Activated CD4-positive, alpha-beta T cell treated with anti-CD3 and anti-CD28 coated beads, Interleukin-2, amount 10 ng/mL, durations not matched to agents 7 days and 5 days (primary cell): ENCODE measurements at regions of chr6 and their contacts with region 1.

Region 1: DNA sequence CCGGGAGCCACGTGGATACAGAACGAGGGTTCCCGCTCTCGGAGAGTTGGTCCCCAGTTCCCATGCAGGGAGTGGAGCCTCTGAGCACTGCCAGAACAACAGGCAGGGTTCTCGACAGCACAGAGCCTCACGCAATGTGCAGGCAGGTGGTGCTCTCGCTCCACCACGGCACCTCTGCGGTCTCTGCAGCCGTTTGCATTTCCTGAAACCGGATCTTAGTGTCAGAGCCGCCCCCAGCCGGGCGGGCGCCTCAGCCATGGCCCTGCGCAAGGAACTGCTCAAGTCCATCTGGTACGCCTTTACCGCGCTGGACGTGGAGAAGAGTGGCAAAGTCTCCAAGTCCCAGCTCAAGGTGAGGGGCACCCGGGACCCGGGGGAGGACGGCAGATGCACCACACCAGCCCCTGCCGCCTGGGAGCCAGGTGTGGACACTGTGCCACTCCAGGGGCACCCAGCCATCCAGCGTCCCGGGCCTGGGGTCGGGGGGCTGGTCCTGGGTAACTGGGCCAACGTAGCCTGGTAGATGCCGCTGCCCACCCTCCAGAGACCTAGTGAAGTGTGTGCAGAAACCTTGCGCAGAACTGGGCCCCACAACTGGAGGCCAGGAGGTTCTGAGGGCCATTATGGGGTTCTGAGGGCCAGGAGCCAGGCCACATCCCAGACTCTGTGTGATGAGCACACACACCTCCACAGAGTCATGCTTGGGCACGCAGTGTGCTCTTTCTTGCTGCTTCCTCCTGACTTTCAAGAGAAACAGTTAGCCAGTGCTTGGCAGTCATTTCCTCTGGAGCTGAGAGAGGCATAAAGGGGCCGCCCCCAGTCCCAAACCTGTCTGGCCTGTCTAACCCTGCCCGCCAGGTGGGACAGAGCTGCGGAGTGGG is at the start of gene DEF6:
- DNase-seq: peak; percentile 93
- H3K4me3 Mint-ChIP-seq: peak within 1 kb of the TSS; percentile 85
- H3K27ac Mint-ChIP-seq: peak within 1 kb of the TSS; percentile 96
- H3K4me1 Mint-ChIP-seq: peaks cover 55% of the 10 kb centered on the region
- H3K27me3 Mint-ChIP-seq: no peaks in the 10 kb centered on the region
- total RNA-seq, gene DEF6: 186 to 219 TPM

Region 2: DNA sequence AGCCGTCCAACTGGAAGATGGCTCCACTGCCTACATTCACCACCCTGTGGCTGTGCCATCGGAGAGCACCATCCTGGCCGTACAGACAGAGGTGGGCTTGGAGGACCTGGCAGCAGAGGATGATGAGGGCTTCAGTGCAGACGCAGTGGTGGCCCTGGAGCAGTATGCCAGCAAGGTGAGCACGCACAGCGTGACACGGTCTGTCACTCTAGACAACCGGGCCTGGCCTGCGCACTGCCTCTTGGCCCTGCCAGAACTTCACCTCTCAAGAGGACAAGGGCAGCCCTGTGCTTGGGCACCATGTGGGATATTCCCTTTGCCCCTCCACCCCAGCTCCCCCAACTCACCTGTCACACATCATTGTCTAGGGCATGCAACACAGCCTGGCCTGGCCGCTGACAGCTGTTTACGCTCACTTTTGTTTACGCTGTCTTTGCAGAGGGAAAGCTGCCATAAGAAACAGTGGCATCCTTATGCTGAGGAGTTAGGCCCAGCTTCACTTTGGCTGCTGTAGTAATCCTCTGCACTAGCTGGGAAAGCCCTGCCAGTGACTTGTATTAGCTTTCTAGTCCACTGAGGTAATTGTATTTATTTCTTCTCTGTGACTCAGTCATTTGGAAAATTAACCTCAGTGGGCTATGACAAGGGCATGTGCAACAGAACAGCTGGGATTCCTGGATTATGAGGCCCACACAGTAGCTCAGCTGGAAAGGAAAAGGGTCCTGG is 10.0 kb before region 1 on chr6:
- CTCF ChIA-PET with region 1: interaction called, 22 read pairs
- POLR2A ChIA-PET with region 1: no interaction called
- DNase-seq: no peak
- H3K4me3 Mint-ChIP-seq: no peak overlapping the region
- H3K27ac Mint-ChIP-seq: no peak overlapping the region
- H3K4me1 Mint-ChIP-seq: no peaks in the 10 kb centered on the region
- H3K27me3 Mint-ChIP-seq: no peaks in the 10 kb centered on the region

Region 3: GRCh38 chr6:35327349-35328027 is 29.6 kb after region 1 on chr6:
- CTCF ChIA-PET with region 1: interaction called, 25 read pairs
- POLR2A ChIA-PET with region 1: interaction called, 5 read pairs
- DNase-seq: peak; percentile 83
- H3K4me3 Mint-ChIP-seq: no peak overlapping the region
- H3K27ac Mint-ChIP-seq: peak overlapping the region; percentile 82
- H3K4me1 Mint-ChIP-seq: peaks cover 28% of the 10 kb centered on the region
- H3K27me3 Mint-ChIP-seq: no peaks in the 10 kb centered on the region

Region 4: GRCh38 chr6:35342258-35343091 is 44.6 kb after region 1 on chr6 and contains the start of gene PPARD:
- CTCF ChIA-PET with region 1: interaction called, 17 read pairs
- POLR2A ChIA-PET with region 1: no interaction called
- DNase-seq: peak; percentile 97
- H3K4me3 Mint-ChIP-seq: peak within 1 kb of the TSS; percentile 96
- H3K27ac Mint-ChIP-seq: peak within 1 kb of the TSS; percentile 93
- H3K4me1 Mint-ChIP-seq: peaks cover 53% of the 10 kb centered on the region
- H3K27me3 Mint-ChIP-seq: peaks cover under 1% of the 10 kb centered on the region
- total RNA-seq, gene PPARD: 24.4 to 25.8 TPM

Region 5: DNA sequence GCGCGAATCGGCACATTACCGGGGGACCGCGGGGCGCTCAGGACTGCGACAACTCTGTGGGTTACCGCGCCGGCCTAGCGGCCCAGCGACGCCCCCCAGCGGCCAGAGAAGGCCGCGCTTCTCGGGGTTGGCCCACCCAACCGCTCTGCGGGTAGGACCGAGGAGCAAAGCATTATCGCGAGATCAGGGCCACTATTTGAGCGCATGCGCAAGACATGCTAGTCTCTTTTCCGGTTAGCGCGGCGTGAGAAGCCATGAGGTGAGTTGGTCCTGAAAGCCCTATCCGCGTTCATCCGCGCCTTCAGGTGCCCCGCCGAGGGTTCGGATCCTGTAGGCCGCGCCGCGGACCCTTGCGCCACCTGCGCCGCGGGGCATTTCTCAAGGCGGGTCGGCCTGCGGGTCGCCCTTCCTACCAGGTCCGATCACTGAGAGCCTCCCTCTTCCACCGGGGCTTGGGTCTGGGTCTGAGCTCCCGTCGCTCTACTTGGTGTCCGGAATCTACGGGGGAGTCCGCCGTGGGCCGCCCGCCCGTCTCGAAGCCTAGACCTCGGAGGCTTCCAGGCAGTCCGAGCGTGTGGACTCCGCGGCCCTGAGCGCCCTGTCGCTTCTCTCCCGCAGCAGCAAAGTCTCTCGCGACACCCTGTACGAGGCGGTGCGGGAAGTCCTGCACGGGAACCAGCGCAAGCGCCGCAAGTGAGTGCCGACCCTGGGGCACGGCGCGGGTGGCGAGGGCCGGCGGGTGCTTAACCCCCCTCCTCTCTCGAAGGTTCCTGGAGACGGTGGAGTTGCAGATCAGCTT is 170.5 kb after region 1 on chr6 and contains the start of gene RPL10A:
- CTCF ChIA-PET with region 1: interaction called, 10 read pairs
- POLR2A ChIA-PET with region 1: no interaction called
- DNase-seq: peak; percentile 98
- H3K4me3 Mint-ChIP-seq: peak within 1 kb of the TSS; percentile 91
- H3K27ac Mint-ChIP-seq: peak within 1 kb of the TSS; percentile 100
- H3K4me1 Mint-ChIP-seq: peaks cover 42% of the 10 kb centered on the region
- H3K27me3 Mint-ChIP-seq: no peaks in the 10 kb centered on the region
- total RNA-seq, gene RPL10A: 1,411 to 1,499 TPM